Activated T-helper 1 cell treated with anti-CD3 and anti-CD28 coated beads, Interleukin-12 subunit alpha, Interleukin-12 subunit beta, Interleukin-2, Interleukin-4 antibody, amounts not matched to agents 30 ng/mL and 10 ng/mL and 1 ng/mL, durations not matched to agents 14 hours and 24 hours and 36 hours (primary cell): ENCODE measurements at regions of chr13 and their contacts with region 1.

Region 1: GRCh38 chr13:30572859-30573275 is 44.9 kb upstream of the USPL1 start:
- DNase-seq: no peak
- H3K4me3 Mint-ChIP-seq: peak overlapping the region; percentile 59
- H3K27ac Mint-ChIP-seq: no peak overlapping the region
- H3K4me1 Mint-ChIP-seq: peaks cover 44% of the 10 kb centered on the region
- H3K27me3 Mint-ChIP-seq: peaks cover 9% of the 10 kb centered on the region

Region 2: GRCh38 chr13:30158774-30159445 is 414.0 kb before region 1 on chr13:
- intact Hi-C with region 1: loop called (anchors 10 kb)
- DNase-seq: no peak
- H3K4me3 Mint-ChIP-seq: peak overlapping the region; percentile 23
- H3K27ac Mint-ChIP-seq: peak overlapping the region; percentile 78
- H3K4me1 Mint-ChIP-seq: peaks cover 43% of the 10 kb centered on the region
- H3K27me3 Mint-ChIP-seq: peaks cover under 1% of the 10 kb centered on the region

Region 3: GRCh38 chr13:30306762-30307193 is 266.1 kb before region 1 on chr13:
- intact Hi-C with region 1: loop called (anchors 10 kb)
- DNase-seq: peak; percentile 90
- H3K4me3 Mint-ChIP-seq: peak overlapping the region; percentile 88
- H3K27ac Mint-ChIP-seq: peak overlapping the region; percentile 84
- H3K4me1 Mint-ChIP-seq: peaks cover 65% of the 10 kb centered on the region
- H3K27me3 Mint-ChIP-seq: no peaks in the 10 kb centered on the region

Region 4: GRCh38 chr13:30545320-30545719 is 27.5 kb before region 1 on chr13:
- intact Hi-C with region 1: no loop called
- DNase-seq: no peak
- H3K4me3 Mint-ChIP-seq: no peak overlapping the region
- H3K27ac Mint-ChIP-seq: no peak overlapping the region
- H3K4me1 Mint-ChIP-seq: no peaks in the 10 kb centered on the region
- H3K27me3 Mint-ChIP-seq: peaks cover 6% of the 10 kb centered on the region

Region 5: DNA sequence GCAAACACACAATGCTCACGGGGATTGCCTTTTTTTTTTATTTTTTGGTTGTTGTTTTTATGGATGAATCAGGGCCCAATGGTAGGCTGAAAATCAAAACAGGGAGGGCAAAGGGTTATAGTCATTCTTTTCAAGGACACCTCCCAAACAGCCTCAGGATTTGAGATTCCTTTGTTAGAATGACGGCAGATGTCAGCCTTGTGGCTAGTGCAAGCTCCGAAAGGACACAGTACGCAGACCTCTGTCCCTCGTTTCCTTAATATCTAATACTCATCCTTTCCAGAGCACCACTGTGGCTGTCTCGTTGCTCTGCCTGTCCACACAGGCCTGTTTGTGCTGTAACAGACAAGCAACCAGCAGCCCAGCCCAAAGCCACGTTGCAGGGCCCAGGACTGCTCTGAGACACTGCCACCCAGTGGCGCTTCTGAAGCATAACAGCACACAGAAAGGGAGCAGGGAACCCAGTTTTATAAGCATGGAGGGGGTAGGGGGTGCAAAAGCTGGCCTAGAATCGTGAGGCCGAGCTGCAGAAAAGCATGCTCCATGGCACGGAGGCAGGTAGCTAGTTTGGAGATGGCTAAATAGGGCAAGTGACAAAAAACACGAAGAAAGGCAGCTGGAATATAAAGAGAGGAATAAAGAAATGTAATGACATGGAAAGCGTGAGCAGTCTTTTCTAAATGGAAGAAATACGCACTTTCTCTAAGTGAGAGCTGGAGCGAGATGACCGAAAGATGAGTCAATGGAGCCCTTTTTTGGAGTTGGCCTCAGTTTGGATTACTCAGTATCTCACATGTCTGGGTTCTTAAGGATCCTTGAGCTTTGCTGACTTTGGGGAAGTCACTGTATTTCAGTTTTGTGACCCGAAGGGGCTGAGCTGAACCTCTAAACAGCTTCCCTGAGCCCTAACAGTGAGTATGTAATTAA is 292.5 kb after region 1 on chr13:
- intact Hi-C with region 1: loop called (anchors 1 kb)
- DNase-seq: peak; percentile 9
- H3K4me3 Mint-ChIP-seq: no peak overlapping the region
- H3K27ac Mint-ChIP-seq: no peak overlapping the region
- H3K4me1 Mint-ChIP-seq: no peaks in the 10 kb centered on the region
- H3K27me3 Mint-ChIP-seq: peaks cover 11% of the 10 kb centered on the region